MCF 10A (cell line): ENCODE measurements at regions of chr18 and their contacts with region 1.

Region 1: DNA sequence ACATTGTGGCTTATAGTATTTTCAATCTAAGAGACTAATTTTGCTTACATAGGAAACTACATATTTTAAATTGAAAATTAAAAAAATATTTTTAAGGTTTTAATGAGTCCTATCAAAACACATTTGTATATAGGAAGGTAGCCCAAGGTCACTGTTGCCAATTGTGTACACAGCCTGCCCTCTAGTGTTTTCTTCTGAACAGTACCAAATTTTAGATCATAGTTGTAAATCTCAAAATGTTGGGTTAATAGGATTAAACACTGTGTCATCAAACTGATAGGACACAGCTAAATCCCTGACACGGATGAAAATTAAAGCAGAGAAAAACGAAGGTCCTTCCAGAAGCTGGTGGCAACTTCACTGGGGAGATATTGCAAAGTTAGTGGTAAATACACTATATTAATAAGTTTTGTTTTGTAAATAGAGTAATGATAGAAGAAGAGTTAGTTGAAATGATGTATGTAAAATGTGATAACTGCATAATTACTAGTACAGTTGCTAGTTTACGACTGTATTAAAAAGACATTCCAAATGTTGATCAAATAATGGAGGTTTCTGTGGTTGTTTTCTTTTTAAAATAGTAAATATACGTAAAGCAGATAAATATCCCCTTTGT is 19.7 kb downstream of the CLUL1 start:
- DNase-seq: peak; percentile 54
- H3K4me3 Mint-ChIP-seq: no peak overlapping the region
- H3K27ac Mint-ChIP-seq: no peak overlapping the region
- H3K4me1 Mint-ChIP-seq: peaks cover 10% of the 10 kb centered on the region
- H3K27me3 Mint-ChIP-seq: peaks cover 22% of the 10 kb centered on the region
- CTCF ChIP-seq: peak; percentile 69

Region 2: GRCh38 chr18:286515-287310 is 329.8 kb before region 1 on chr18:
- CTCF ChIA-PET with region 1: interaction called, 29 read pairs
- POLR2A ChIA-PET with region 1: no interaction called
- intact Hi-C with region 1: loop called (anchors 1 kb)
- DNase-seq: peak; percentile 35
- H3K4me3 Mint-ChIP-seq: no peak overlapping the region
- H3K27ac Mint-ChIP-seq: no peak overlapping the region
- H3K4me1 Mint-ChIP-seq: no peaks in the 10 kb centered on the region
- H3K27me3 Mint-ChIP-seq: no peaks in the 10 kb centered on the region
- CTCF ChIP-seq: peak; percentile 28

Region 3: DNA sequence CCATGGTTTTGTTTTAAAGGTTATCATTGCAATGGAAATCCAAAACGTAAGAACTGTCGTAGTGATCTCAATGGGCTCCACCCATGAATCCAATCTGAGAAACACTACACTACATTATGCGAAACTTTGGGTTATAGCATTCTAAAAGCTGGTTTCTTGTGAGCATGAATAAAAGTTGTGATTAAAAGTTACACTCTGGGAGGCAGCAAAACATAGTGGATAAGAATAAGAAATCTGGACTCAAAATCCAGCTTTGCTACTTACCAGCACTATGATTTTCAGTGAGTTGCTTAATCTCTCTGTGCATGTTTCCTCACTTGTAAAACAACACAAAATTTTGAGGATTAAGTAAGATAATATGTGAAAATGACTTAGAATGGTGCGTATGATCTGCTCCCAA is 323.0 kb before region 1 on chr18:
- CTCF ChIA-PET with region 1: interaction called, 29 read pairs
- POLR2A ChIA-PET with region 1: interaction called, 4 read pairs
- intact Hi-C with region 1: loop called (anchors 1 kb)
- DNase-seq: no peak
- H3K4me3 Mint-ChIP-seq: no peak overlapping the region
- H3K27ac Mint-ChIP-seq: no peak overlapping the region
- H3K4me1 Mint-ChIP-seq: no peaks in the 10 kb centered on the region
- H3K27me3 Mint-ChIP-seq: peaks cover 16% of the 10 kb centered on the region
- CTCF ChIP-seq: no peak

Region 4: DNA sequence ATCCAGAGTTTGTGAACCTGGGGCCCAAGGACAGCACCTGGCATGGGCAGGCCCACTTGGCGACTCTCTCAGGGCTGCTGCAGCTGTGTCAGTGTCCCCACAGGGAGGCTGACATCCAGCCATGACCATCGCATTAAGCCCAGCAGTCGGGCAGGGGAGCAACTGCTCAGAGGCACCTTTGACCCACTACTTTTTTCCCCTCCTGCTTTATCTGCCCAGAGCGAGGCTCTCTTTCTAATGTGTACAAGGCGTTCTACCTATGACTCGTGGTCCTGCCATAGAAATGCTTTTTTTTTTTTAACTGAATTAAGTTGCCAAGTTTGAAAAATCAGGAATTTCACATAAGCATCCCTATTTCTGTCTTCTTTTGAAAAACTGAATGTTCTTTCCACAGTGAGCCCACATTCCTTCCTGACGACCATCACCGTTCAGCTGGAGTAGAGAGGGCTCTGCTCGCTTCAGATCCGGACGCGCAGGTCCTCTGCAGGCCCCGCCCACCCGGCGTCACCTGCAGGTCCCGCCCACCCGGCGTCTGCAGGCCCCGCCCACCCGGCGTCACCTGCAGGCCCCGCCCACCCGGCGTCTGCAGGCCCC is 20.1 kb before region 1 on chr18:
- CTCF ChIA-PET with region 1: interaction called, 14 read pairs
- POLR2A ChIA-PET with region 1: interaction called, 4 read pairs
- intact Hi-C with region 1: loop called (anchors 1 kb)
- DNase-seq: peak; percentile 52
- H3K4me3 Mint-ChIP-seq: peak overlapping the region; percentile 69
- H3K27ac Mint-ChIP-seq: no peak overlapping the region
- H3K4me1 Mint-ChIP-seq: no peaks in the 10 kb centered on the region
- H3K27me3 Mint-ChIP-seq: peaks cover 60% of the 10 kb centered on the region
- CTCF ChIP-seq: no peak

Region 5: GRCh38 chr18:711657-712400 is 95.3 kb after region 1 on chr18:
- CTCF ChIA-PET with region 1: no interaction called
- POLR2A ChIA-PET with region 1: no interaction called
- intact Hi-C with region 1: no loop called
- DNase-seq: peak; percentile 86
- H3K4me3 Mint-ChIP-seq: peak overlapping the region; percentile 88
- H3K27ac Mint-ChIP-seq: peak overlapping the region; percentile 96
- H3K4me1 Mint-ChIP-seq: peaks cover 11% of the 10 kb centered on the region
- H3K27me3 Mint-ChIP-seq: no peaks in the 10 kb centered on the region
- CTCF ChIP-seq: no peak